Activated naive CD4-positive, alpha-beta T cell treated with anti-CD3 and anti-CD28 coated beads for 36 hours (primary cell): ENCODE measurements at regions of chr5 and their contacts with region 1.

Region 1: GRCh38 chr5:132820162-132820754 is 7.2 kb downstream of the SOWAHA start:
- DNase-seq: peak; percentile 97
- H3K4me3 Mint-ChIP-seq: peak overlapping the region; percentile 41
- H3K27ac Mint-ChIP-seq: no peak overlapping the region
- H3K4me1 Mint-ChIP-seq: peaks cover 12% of the 10 kb centered on the region
- H3K27me3 Mint-ChIP-seq: peaks cover 29% of the 10 kb centered on the region

Region 2: DNA sequence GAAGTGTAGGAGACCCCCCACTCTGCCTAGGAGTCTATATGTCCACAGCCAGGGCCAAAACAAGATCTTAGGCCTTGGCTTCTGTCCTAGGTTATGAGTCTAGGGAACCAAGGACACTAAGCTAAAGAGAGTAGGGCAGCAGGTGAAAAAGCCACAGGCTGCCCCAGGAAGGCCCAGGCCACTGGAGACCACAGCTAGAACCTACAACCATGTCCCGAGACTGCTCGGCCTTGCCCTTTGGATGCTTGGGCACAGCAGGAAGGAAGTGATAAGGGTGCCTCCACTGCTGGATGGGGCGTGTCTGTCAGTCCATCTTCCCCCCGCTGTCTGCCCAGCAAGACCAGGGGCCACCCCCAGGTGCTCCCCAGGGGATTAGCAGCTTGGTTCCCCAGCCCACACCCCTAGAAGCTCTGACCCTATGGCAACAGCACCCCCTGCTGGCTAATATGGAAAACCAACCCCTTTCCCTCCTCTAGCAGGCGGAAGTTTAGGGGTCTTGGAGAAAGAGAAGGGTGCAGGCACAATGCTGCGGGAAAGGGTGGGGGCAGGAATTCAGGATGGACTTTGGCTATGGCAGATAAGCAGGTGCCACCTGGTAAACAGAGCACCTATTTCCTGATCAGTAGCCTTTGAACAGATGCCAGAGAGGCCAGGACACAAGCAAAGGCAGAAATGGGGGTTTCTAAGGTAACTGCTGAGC is 319.2 kb before region 1 on chr5:
- CTCF ChIA-PET with region 1: interaction called, 15 read pairs
- intact Hi-C with region 1: loop called (anchors 1 kb)
- DNase-seq: peak; percentile 86
- H3K4me3 Mint-ChIP-seq: no peak overlapping the region
- H3K27ac Mint-ChIP-seq: no peak overlapping the region
- H3K4me1 Mint-ChIP-seq: peaks cover 19% of the 10 kb centered on the region
- H3K27me3 Mint-ChIP-seq: no peaks in the 10 kb centered on the region

Region 3: DNA sequence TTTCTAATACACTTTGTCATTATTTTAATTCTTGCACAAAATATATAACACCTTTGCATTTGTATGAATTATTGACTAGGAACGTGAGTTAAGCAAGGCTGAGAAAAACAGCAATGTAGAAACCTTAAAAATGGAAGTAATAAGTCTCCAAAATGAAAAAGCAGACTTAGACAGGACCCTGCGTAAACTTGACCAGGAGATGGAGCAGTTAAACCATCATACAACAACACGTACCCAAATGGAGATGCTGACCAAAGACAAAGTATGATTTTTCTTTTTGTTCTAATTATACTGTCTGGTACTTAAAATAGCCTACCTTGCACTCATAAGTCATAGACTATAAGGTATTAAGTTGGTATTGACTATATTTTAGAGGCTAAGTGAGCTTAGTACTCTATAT is 229.1 kb before region 1 on chr5:
- CTCF ChIA-PET with region 1: no interaction called
- intact Hi-C with region 1: loop called (anchors 1 kb)
- DNase-seq: no peak
- H3K4me3 Mint-ChIP-seq: no peak overlapping the region
- H3K27ac Mint-ChIP-seq: no peak overlapping the region
- H3K4me1 Mint-ChIP-seq: no peaks in the 10 kb centered on the region
- H3K27me3 Mint-ChIP-seq: no peaks in the 10 kb centered on the region

Region 4: DNA sequence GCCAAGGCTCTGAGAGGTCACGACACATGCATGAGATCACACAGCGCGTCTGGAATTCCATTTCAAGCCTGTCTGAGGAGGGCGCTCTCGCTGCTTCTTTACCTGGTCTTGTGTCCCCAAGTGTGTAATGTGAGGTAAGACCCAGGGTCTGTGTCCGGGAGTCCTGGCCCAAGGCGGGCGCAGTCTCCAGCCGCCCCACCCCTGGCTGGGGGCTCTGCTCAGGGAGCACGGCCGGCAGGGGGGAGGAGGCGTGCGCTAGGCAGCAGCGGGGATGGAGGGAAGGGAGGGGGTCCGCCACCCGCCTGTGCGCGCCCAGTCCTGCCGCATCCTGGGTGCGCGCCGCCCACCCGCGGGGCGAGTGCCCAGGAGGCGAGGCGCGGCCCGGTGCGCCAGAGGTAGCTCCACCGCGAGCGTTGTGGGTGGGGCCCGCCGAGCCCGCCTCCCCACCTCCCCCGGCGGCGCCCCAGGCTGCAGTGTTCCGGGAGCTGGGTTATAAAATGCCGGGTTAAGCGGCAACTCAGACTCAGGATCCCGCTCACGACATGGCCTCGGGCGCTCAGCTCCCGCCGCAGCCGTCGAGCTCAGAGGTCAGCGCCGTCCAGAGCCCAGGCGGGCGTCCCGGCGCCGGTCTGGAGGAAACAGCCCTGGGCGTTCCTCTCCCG is 73.2 kb before region 1 on chr5 and contains the start of gene CCNI2:
- CTCF ChIA-PET with region 1: interaction called, 34 read pairs
- intact Hi-C with region 1: loop called (anchors 1 kb)
- DNase-seq: peak; percentile 80
- H3K4me3 Mint-ChIP-seq: peak within 1 kb of the TSS; percentile 71
- H3K27ac Mint-ChIP-seq: no peak within 1 kb of the TSS
- H3K4me1 Mint-ChIP-seq: peaks cover 22% of the 10 kb centered on the region
- H3K27me3 Mint-ChIP-seq: no peaks in the 10 kb centered on the region
- total RNA-seq, gene CCNI2: 1.4 to 2.5 TPM

Region 5: GRCh38 chr5:132807163-132807838 is 13.0 kb before region 1 on chr5:
- CTCF ChIA-PET with region 1: interaction called, 20 read pairs
- intact Hi-C with region 1: no loop called
- DNase-seq: no peak
- H3K4me3 Mint-ChIP-seq: no peak overlapping the region
- H3K27ac Mint-ChIP-seq: no peak overlapping the region
- H3K4me1 Mint-ChIP-seq: no peaks in the 10 kb centered on the region
- H3K27me3 Mint-ChIP-seq: peaks cover 63% of the 10 kb centered on the region

Region 6: DNA sequence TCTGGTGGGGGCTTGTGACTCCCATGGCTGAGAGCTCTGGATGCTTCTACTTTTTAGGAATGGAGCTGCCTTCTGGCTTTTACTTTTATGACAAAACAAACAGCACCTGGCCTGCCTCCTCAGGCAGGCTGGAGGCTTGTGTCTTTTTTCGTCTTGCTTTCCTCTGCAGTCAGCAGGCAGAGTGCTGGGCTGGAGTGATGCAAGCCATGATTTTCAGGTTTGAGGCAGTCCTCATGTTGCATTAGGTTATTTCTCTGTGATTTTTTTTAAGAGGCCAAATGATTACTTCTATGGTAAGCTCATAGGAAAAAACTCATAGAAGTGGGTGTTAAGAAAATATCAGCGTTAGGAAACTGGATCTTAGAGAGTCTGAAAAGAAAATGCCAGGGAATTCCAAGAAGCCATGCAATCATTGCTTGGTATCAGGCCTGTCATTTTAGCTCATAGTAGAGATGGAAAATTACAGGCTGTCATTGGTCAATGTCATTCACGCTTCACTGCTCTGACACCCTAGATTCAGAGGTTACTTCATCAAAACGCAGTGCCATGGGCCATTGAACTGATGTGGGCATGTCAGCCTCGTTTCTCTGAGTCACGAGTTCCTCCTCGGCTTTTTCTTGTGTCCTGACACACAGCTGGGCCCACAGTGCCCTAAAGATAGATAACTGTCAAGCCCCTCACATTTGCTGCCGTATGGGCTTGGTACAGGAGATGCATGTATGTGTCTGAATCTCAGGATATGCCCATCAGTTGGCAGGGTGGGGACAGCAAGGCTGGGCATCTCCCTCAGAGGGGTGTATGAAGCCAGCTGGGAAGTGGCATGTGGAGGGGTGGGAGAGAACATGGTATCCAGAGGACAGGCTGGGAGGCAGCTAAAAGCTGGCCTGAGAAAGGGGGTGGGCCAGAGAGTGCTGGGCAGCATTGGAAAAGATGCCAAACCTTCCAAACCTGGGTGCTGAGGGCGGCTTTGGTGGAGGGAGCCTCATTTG is 383.4 kb after region 1 on chr5:
- CTCF ChIA-PET with region 1: no interaction called
- intact Hi-C with region 1: no loop called
- DNase-seq: no peak
- H3K4me3 Mint-ChIP-seq: no peak overlapping the region
- H3K27ac Mint-ChIP-seq: no peak overlapping the region
- H3K4me1 Mint-ChIP-seq: no peaks in the 10 kb centered on the region
- H3K27me3 Mint-ChIP-seq: no peaks in the 10 kb centered on the region